ENCODE measurements at regions of chr1 and their contacts with region 1.

Region 1: GRCh38 chr1:212477014-212477679 is 44.4 kb downstream of the NENF start:
- DNase-seq: peak; percentile 89
- H3K4me3 ChIP-seq: no peak overlapping the region
- H3K27ac ChIP-seq: peak overlapping the region; percentile 61 to 73 (median 66)
- H3K4me1 ChIP-seq: peaks cover 0 to 18% (median 13%) of the 10 kb centered on the region in 4 donors
- H3K27me3 ChIP-seq: no peaks in the 10 kb centered on the region
- CTCF ChIP-seq: peak; percentile 87 to 95 (median 89)
- EP300 ChIP-seq: no peak
- POLR2A ChIP-seq: no peak

Region 2: DNA sequence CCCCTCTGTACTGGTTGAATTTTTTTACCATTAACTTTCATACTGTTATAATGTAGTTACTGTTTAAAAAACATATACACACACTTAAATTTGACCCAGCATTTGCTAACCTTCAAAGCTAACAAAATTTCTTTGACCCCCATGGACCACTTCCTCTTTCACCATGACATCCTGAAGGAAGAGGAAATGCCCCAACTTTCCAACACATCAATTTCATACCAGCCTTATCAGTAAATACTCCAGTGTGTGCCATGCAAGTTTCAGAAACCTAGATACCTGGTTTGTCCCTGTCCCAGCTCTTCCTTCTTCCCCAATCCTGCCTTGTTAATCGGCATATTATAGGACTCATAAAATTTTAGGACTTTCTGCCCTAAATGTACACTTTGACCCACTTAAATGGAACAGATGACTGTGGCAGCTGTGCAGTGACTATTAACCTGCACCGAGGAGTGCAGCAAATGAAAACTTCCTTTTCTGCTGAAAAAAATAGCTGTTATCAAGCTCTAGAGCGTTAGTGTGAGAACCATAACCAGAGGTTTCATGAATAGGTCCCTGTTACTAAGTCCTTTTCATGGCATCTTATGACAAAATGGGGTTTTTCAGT is 387.5 kb before region 1 on chr1:
- in situ Hi-C with region 1: no loop called
- intact Hi-C with region 1: no loop called
- DNase-seq: no peak
- H3K4me3 ChIP-seq: no peak overlapping the region
- H3K27ac ChIP-seq: peak overlapping the region in 2 of 4 donors; percentile 10 to 51
- H3K4me1 ChIP-seq: peaks cover 12 to 26% (median 19%) of the 10 kb centered on the region in 4 donors
- H3K27me3 ChIP-seq: no peaks in the 10 kb centered on the region
- CTCF ChIP-seq: no peak
- EP300 ChIP-seq: no peak
- POLR2A ChIP-seq: no peak

Region 3: DNA sequence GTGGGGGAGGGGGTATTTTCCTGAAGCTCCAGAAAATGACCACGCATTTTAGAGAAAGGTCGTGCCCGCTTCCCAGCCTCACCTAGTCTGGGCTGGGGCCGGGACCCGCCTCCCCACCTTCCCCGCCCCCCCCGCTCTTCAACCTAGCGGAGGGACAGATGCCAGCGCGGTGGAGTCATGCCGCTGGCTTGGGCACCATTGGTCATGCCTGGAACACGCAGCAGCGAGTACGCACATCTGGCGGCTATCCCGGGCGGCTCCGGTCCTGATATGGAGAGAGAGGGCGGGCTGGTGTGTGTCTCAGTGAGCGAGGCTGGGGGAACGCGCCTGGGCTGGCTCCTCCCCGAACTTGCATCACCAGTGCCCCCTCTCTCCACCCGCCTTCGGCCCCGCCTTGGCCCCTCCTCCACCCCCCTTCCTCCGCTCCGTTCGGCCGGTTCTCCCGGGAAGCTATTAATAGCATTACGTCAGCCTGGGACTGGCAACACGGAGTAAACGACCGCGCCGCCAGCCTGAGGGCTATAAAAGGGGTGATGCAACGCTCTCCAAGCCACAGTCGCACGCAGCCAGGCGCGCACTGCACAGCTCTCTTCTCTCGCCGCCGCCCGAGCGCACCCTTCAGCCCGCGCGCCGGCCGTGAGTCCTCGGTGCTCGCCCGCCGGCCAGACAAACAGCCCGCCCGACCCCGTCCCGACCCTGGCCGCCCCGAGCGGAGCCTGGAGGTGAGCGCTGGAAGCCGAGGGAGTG is 131.2 kb after region 1 on chr1 and contains the start of gene ATF3:
- in situ Hi-C with region 1: no loop called
- intact Hi-C with region 1: loop called (anchors 10 kb)
- DNase-seq: peak; percentile 99
- H3K4me3 ChIP-seq: peak within 1 kb of the TSS; percentile 61 to 87 (median 79)
- H3K27ac ChIP-seq: peak within 1 kb of the TSS; percentile 96 to 99 (median 98)
- H3K4me1 ChIP-seq: peaks cover 0 to 37% (median 34%) of the 10 kb centered on the region in 4 donors
- H3K27me3 ChIP-seq: peaks cover 42% of the 10 kb centered on the region
- CTCF ChIP-seq: no peak
- EP300 ChIP-seq: peak; percentile 48
- POLR2A ChIP-seq: peak; percentile 100
- total RNA-seq, gene ATF3: 7.8 to 84.8 (median 46.1) TPM

Region 4: DNA sequence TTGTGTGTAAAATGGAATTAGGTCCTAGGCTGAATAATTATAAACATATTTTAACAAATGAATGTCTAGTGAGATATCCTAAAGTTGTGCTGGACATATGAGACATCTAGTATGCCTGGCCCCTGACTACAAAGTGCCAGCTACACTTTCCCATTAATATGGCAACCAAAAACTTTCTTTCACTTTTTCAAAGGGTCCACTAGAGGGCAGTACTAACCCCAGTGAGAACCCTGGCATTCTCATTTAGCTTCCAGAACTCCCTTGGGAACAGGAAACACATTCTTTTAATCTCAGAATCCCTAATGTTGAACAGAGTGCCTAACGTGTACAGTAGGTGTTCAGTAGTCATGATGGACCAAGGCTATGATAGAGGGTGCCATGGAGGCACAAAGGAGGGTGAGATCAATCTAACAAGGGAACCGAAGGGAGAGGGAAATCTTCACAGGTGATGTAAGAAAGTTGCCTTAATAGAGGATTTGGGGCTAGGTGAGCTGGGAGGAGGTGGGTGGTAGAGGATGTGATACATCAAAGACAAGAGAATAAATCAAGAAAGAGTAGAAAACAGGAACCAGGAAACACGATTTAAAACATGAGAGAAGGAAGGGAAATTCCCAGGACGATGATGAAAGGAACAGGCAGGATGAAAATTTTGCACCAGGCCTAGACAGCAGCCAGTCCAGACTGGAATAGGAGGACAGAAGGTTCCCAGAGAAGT is 272.8 kb after region 1 on chr1:
- in situ Hi-C with region 1: loop called in 1 of 4 experiments (anchors 25 kb)
- intact Hi-C with region 1: no loop called
- DNase-seq: no peak
- H3K4me3 ChIP-seq: no peak overlapping the region
- H3K27ac ChIP-seq: peak overlapping the region in 1 of 4 donors; percentile 30
- H3K4me1 ChIP-seq: peaks cover 0 to 36% (median 7%) of the 10 kb centered on the region in 4 donors
- H3K27me3 ChIP-seq: no peaks in the 10 kb centered on the region
- CTCF ChIP-seq: peak; percentile 44 to 75 (median 63)
- EP300 ChIP-seq: no peak
- POLR2A ChIP-seq: no peak

Region 5: GRCh38 chr1:212781225-212781624 is 304.1 kb after region 1 on chr1:
- in situ Hi-C with region 1: no loop called
- intact Hi-C with region 1: no loop called
- DNase-seq: no peak
- H3K4me3 ChIP-seq: no peak overlapping the region
- H3K27ac ChIP-seq: no peak overlapping the region
- H3K4me1 ChIP-seq: no peaks in the 10 kb centered on the region
- H3K27me3 ChIP-seq: no peaks in the 10 kb centered on the region
- CTCF ChIP-seq: no peak
- EP300 ChIP-seq: no peak
- POLR2A ChIP-seq: no peak

Region 6: DNA sequence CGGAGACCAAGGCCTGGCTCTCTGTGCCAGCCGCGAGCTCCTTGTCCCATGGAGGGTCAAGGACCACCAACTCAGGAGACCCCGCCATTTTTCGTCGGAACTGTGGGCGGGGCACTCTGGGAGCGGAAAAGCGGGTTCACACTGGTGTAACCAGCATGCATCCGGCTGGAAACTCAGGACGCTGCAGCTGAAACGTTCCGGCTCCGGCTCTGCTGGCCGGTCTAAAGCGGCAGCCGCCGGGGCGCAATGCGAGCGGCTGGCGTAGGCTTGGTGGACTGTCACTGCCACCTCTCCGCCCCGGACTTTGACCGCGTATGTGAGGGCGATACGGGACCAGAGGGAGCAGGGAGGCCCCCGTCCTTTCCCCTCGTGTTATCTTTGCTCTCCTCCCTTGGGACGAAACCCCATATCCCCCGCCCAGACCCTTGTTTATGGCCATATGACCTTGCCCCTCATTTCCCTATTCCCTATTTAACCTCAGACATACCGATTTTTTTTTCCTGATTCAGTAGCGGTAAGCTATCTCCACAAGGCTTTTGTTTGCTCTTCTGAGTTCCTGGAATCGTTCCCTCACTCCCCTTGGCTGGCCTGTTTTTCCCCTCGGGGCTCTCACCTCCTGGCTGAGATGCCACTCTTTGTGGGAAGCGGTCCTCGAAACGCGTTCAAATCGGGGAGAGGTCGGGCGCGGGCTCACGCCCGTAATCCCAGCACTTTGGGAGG is 314.7 kb after region 1 on chr1 and contains the starts of genes NSL1 and TATDN3:
- in situ Hi-C with region 1: no loop called
- intact Hi-C with region 1: loop called (anchors 10 kb)
- DNase-seq: peak; percentile 94
- H3K4me3 ChIP-seq: peak within 1 kb of the TSS; percentile 72 to 93 (median 90)
- H3K27ac ChIP-seq: peak within 1 kb of the TSS; percentile 90 to 99 (median 96)
- H3K4me1 ChIP-seq: peaks cover 9 to 47% (median 22%) of the 10 kb centered on the region in 4 donors
- H3K27me3 ChIP-seq: no peaks in the 10 kb centered on the region
- CTCF ChIP-seq: no peak
- EP300 ChIP-seq: no peak
- POLR2A ChIP-seq: peak; percentile 89
- total RNA-seq, gene NSL1: 4.2 to 33.7 (median 28.4) TPM
- total RNA-seq, gene TATDN3: 1.00 to 17.0 (median 4.6) TPM

Region 7: DNA sequence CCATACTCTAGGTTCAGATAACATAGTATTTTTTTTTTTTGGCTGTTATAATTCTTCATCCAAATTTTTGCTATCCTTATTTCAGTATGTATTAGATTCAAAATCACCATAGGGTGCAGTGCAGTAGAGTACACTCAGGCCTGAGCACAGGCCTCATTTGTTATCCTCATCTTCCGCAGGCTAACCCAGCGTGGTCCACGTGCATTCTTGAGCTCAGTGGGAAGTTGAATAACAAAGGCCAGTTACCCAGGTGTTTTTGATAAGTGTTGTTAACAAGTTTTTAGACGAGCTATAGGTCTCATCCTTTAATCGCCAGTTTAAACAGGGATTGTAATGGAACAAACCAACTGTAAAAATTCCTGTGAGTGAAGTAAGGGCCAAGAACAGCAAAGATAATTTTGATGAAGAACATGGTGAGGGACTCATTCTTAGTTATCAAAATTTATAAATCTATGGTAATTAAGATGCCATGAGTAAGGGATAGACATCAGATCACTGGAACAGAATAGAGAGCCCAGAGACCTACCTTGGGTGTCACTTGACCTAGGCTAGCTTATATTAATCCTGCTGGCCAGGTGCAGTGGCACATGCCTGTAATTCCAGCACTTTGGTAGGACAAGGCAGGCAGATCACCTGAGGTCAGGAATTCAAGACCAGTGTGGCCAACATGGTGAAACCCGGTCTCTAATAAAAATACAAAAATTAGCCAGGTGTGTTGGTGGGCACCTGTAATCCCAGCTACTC is 403.0 kb after region 1 on chr1:
- in situ Hi-C with region 1: no loop called
- intact Hi-C with region 1: no loop called
- DNase-seq: no peak
- H3K4me3 ChIP-seq: no peak overlapping the region
- H3K27ac ChIP-seq: no peak overlapping the region
- H3K4me1 ChIP-seq: no peaks in the 10 kb centered on the region
- H3K27me3 ChIP-seq: no peaks in the 10 kb centered on the region
- CTCF ChIP-seq: no peak
- EP300 ChIP-seq: no peak
- POLR2A ChIP-seq: no peak

Region 8: GRCh38 chr1:213281640-213282570 is 804.8 kb after region 1 on chr1:
- in situ Hi-C with region 1: no loop called
- intact Hi-C with region 1: no loop called
- DNase-seq: no peak
- H3K4me3 ChIP-seq: no peak overlapping the region
- H3K27ac ChIP-seq: no peak overlapping the region
- H3K4me1 ChIP-seq: no peaks in the 10 kb centered on the region
- H3K27me3 ChIP-seq: no peaks in the 10 kb centered on the region
- CTCF ChIP-seq: no peak
- EP300 ChIP-seq: no peak
- POLR2A ChIP-seq: no peak

Measured in transverse colon (tissue), 4 donors.